Psoas muscle (tissue), 8 donors: ENCODE measurements at regions of chr5 and their contacts with region 1.

Region 1: GRCh38 chr5:121949867-121950266 is 11.9 kb upstream of the SRFBP1 start:
- DNase-seq: no peak
- ATAC-seq: peak in 3 of 4 donors; percentile 43 to 77 (median 55)
- H3K4me3 ChIP-seq: no peak overlapping the region
- H3K27ac ChIP-seq: no peak overlapping the region
- H3K4me1 ChIP-seq: no peaks in the 10 kb centered on the region
- H3K27me3 ChIP-seq: no peaks in the 10 kb centered on the region
- CTCF ChIP-seq: peak; percentile 58

Region 2: DNA sequence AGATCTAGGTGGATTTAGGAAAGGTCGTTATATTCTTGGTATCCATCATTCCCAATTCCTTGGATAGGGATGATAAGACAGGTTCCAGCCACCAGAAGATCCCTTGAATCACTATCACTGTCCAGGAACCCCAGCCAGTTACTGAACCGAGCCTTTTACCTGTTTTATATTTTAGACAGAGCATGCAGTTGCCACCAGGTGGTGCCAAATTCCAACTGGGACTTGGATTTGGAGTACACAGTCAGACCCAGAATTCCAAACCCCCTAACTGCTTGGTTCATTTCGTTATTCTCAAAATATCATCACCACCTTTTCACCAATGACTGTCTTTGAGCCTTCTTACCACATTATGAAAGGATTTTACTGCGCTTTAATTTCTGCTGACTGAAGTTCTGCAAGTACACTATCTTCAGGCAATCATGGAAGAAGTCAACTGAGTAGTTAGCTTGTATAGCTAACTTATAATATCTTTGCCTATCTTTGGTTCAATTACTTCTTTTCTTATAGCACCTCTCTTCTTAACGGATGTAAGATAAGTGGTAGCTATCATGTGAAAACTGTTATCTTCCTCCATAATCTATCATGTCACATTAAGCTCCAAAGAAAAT is 1293.9 kb before region 1 on chr5:
- intact Hi-C with region 1: loop called in 1 of 2 experiments (anchors 5 kb)
- DNase-seq: no peak
- ATAC-seq: no peak
- H3K4me3 ChIP-seq: no peak overlapping the region
- H3K27ac ChIP-seq: no peak overlapping the region
- H3K4me1 ChIP-seq: no peaks in the 10 kb centered on the region
- H3K27me3 ChIP-seq: no peaks in the 10 kb centered on the region
- CTCF ChIP-seq: peak; percentile 31

Region 3: GRCh38 chr5:121630402-121630801 is 319.5 kb before region 1 on chr5:
- intact Hi-C with region 1: loop called in 1 of 2 experiments (anchors 5 kb)
- DNase-seq: no peak
- ATAC-seq: peak; percentile 55 to 88 (median 70)
- H3K4me3 ChIP-seq: no peak overlapping the region
- H3K27ac ChIP-seq: no peak overlapping the region
- H3K4me1 ChIP-seq: no peaks in the 10 kb centered on the region
- H3K27me3 ChIP-seq: no peaks in the 10 kb centered on the region
- CTCF ChIP-seq: peak; percentile 32

Region 4: GRCh38 chr5:121862801-121863200 is 87.1 kb before region 1 on chr5:
- intact Hi-C with region 1: no loop called
- DNase-seq: no peak
- ATAC-seq: no peak
- H3K4me3 ChIP-seq: no peak overlapping the region
- H3K27ac ChIP-seq: no peak overlapping the region
- H3K4me1 ChIP-seq: no peaks in the 10 kb centered on the region
- H3K27me3 ChIP-seq: no peaks in the 10 kb centered on the region
- CTCF ChIP-seq: no peak

Region 5: DNA sequence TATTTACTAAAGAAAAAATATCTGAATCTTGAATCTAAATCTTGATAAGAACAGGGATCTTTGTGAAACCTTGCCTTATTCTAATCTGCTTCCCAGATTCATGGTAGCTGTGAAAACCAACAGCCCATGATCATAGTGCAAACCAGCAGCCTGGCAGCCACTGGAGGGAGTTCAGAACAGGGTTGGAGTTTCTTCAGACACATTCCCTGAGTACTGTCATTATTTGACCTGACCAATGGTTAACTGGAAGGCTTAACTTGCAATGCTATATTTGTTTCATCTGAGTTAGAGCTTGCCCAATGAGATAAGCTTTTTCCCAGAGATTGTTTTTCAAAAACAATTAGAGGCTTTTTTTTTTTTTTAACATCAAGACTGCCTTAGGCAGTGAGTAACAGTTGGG is 80.4 kb after region 1 on chr5:
- intact Hi-C with region 1: no loop called
- DNase-seq: no peak
- ATAC-seq: no peak
- H3K4me3 ChIP-seq: no peak overlapping the region
- H3K27ac ChIP-seq: no peak overlapping the region
- H3K4me1 ChIP-seq: no peaks in the 10 kb centered on the region
- H3K27me3 ChIP-seq: no peaks in the 10 kb centered on the region
- CTCF ChIP-seq: no peak